Dendritic cell treated with granulocyte-macrophage colony-stimulating factor and Interleukin-4, amounts not matched to agents 40 ng/mL and 50 ng/mL, for 4 days (primary cell): ENCODE measurements at regions of chr15 and their contacts with region 1.

Region 1: GRCh38 chr15:45166834-45167630 is 20.7 kb downstream of the SHF start:
- H3K4me3 Mint-ChIP-seq: peak overlapping the region; percentile 57
- H3K27ac Mint-ChIP-seq: peak overlapping the region; percentile 85
- H3K4me1 Mint-ChIP-seq: peaks cover 64% of the 10 kb centered on the region
- H3K27me3 Mint-ChIP-seq: no peaks in the 10 kb centered on the region

Region 2: GRCh38 chr15:44296625-44297524 is 870.2 kb before region 1 on chr15:
- intact Hi-C with region 1: no loop called
- H3K4me3 Mint-ChIP-seq: peak overlapping the region; percentile 57
- H3K27ac Mint-ChIP-seq: peak overlapping the region; percentile 79
- H3K4me1 Mint-ChIP-seq: peaks cover 55% of the 10 kb centered on the region
- H3K27me3 Mint-ChIP-seq: no peaks in the 10 kb centered on the region

Region 3: DNA sequence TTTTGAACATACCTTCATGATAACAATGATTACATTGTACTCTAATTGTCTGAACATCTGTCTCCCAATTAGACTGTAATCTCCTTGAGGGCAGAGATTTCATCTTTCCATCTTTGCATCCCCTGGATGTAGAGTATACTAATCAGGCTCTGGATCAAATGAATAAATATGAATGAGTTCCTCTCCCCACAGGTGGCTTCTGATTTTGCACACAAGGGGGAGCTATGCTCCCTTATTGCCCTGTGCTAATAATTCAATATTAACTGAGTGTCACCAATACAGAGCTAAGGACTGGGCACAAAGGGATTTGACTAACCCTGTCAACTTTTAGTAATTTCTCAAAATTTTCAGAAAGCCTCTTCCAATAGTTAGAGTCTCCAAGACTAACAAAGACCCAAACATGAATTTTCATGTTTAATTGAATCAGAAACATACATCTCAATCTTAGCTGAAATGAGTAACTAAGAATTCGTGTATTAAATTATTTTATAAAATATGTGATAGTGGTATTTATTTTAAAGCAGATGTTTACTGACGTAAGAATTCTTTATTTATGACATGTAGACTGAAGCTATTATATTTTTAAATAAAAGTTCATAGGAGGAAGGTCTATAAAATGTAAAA is 40.4 kb before region 1 on chr15:
- intact Hi-C with region 1: loop called (anchors 5 kb)
- H3K4me3 Mint-ChIP-seq: no peak overlapping the region
- H3K27ac Mint-ChIP-seq: no peak overlapping the region
- H3K4me1 Mint-ChIP-seq: peaks cover 29% of the 10 kb centered on the region
- H3K27me3 Mint-ChIP-seq: peaks cover 72% of the 10 kb centered on the region

Region 4: GRCh38 chr15:45198337-45199135 is 31.5 kb after region 1 on chr15:
- intact Hi-C with region 1: loop called (anchors 1 kb)
- H3K4me3 Mint-ChIP-seq: no peak overlapping the region
- H3K27ac Mint-ChIP-seq: no peak overlapping the region
- H3K4me1 Mint-ChIP-seq: peaks cover 19% of the 10 kb centered on the region
- H3K27me3 Mint-ChIP-seq: no peaks in the 10 kb centered on the region

Region 5: GRCh38 chr15:45402162-45402954 is 235.3 kb after region 1 on chr15:
- intact Hi-C with region 1: loop called (anchors 2 kb)
- H3K4me3 Mint-ChIP-seq: peak overlapping the region; percentile 95
- H3K27ac Mint-ChIP-seq: peak overlapping the region; percentile 92
- H3K4me1 Mint-ChIP-seq: peaks cover 35% of the 10 kb centered on the region
- H3K27me3 Mint-ChIP-seq: no peaks in the 10 kb centered on the region